Naive thymus-derived CD4-positive, alpha-beta T cell (primary cell): ENCODE measurements at regions of chr2 and their contacts with region 1.

Region 1: DNA sequence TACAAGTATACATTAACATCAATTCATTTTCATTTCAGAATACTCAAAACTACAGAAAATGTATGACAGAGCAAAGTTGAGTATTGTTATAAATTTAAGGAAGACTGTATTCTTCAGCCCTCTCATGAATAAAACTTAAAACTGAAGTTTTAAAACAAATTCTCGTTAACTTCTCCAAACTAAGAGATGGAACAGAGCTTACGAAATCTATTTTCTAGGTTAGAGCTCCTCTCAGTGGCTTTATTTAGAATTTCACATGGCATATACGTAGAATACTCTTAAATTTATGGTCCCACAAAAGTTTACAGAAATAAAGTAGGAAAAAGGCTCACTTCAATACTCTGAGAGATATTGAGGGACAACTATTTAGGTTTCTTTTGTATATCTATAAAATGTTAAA is 612.1 kb downstream of the KCNJ3 start:
- DNase-seq: no peak
- ATAC-seq: no peak
- H3K4me3 ChIP-seq: no peak overlapping the region
- H3K4me3 Mint-ChIP-seq: no peak overlapping the region
- H3K27ac ChIP-seq: no peak overlapping the region
- H3K27ac Mint-ChIP-seq: no peak overlapping the region
- H3K4me1 ChIP-seq: no peaks in the 10 kb centered on the region
- H3K4me1 Mint-ChIP-seq: no peaks in the 10 kb centered on the region
- H3K27me3 ChIP-seq: no peaks in the 10 kb centered on the region
- H3K27me3 Mint-ChIP-seq: no peaks in the 10 kb centered on the region

Region 2: DNA sequence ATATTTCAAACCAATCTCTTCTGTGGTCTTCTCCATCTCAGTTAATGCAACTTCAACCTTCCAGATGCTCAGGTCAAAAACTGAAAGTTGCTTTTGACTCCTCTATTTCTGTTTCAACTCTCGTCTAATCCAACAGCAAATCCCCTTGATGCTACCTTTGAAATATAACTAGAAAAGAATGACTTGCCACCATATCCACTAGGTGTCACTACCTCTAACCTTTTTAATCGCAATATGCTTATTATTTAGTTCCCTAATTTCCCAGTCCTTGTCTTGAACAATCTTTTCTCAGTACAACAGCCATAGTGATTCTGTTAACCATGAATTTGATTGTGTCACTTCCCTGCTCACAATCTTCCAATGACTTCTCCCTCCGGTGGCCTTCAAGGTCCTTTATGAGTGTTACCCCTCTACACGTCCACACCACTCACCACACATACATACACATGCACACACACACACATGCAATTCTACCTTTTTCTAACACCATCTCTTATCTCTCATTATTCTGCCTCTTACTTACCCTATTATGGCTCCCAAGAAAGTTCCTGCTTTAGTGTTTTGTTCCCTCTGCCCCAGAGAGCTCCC is 857.6 kb before region 1 on chr2:
- CTCF ChIA-PET with region 1: no interaction called
- POLR2A ChIA-PET with region 1: no interaction called
- intact Hi-C with region 1: loop called in 1 of 2 experiments (anchors 10 kb)
- DNase-seq: no peak
- ATAC-seq: no peak
- H3K4me3 ChIP-seq: no peak overlapping the region
- H3K4me3 Mint-ChIP-seq: no peak overlapping the region
- H3K27ac ChIP-seq: no peak overlapping the region
- H3K27ac Mint-ChIP-seq: no peak overlapping the region
- H3K4me1 ChIP-seq: no peaks in the 10 kb centered on the region
- H3K4me1 Mint-ChIP-seq: peaks cover 0 to 7% (median 0%) of the 10 kb centered on the region in 7 donors
- H3K27me3 ChIP-seq: no peaks in the 10 kb centered on the region
- H3K27me3 Mint-ChIP-seq: no peaks in the 10 kb centered on the region